H1 (cell line): ENCODE measurements at regions of chr4 and their contacts with region 1.

Region 1: GRCh38 chr4:98506462-98507132 is 151.8 kb downstream of the TSPAN5 start:
- DNase-seq: no peak
- H3K4me3 ChIP-seq: no peak overlapping the region
- H3K27ac ChIP-seq: no peak overlapping the region
- H3K4me1 ChIP-seq: peaks cover 0 to 3% (median under 1%) of the 10 kb centered on the region in 4 experiments; a peak in 2 of 7 replicates
- H3K27me3 ChIP-seq: no peaks in the 10 kb centered on the region
- CTCF ChIP-seq: peak; percentile 36 to 60 (median 57)
- EP300 ChIP-seq: no peak
- POLR2A ChIP-seq: no peak
- RAD21 ChIP-seq: peak; percentile 57 to 67

Region 2: GRCh38 chr4:98496141-98496845 is 10.3 kb before region 1 on chr4:
- CTCF ChIA-PET with region 1: interaction called, 15 read pairs
- POLR2A ChIA-PET with region 1: no interaction called
- DNase-seq: no peak
- H3K4me3 ChIP-seq: no peak overlapping the region
- H3K27ac ChIP-seq: no peak overlapping the region
- H3K4me1 ChIP-seq: peaks cover 0 to 6% (median 2%) of the 10 kb centered on the region in 4 experiments; a peak in 3 of 7 replicates
- H3K27me3 ChIP-seq: no peaks in the 10 kb centered on the region
- CTCF ChIP-seq: no peak
- EP300 ChIP-seq: no peak
- POLR2A ChIP-seq: no peak
- RAD21 ChIP-seq: no peak

Region 3: GRCh38 chr4:98527534-98528269 is 21.1 kb after region 1 on chr4:
- CTCF ChIA-PET with region 1: interaction called, 11 read pairs
- POLR2A ChIA-PET with region 1: no interaction called
- DNase-seq: no peak
- H3K4me3 ChIP-seq: no peak overlapping the region
- H3K27ac ChIP-seq: no peak overlapping the region
- H3K4me1 ChIP-seq: no peaks in the 10 kb centered on the region
- H3K27me3 ChIP-seq: no peaks in the 10 kb centered on the region
- CTCF ChIP-seq: no peak
- EP300 ChIP-seq: no peak
- POLR2A ChIP-seq: no peak
- RAD21 ChIP-seq: no peak